ENCODE measurements at regions of chr9 and their contacts with region 1.

Region 1: GRCh38 chr9:20622330-20623020 is at the start of gene MLLT3:
- DNase-seq: peak; percentile 98
- H3K4me3 Mint-ChIP-seq: peak within 1 kb of the TSS; percentile 96
- H3K27ac Mint-ChIP-seq: peak within 1 kb of the TSS; percentile 94
- H3K4me1 Mint-ChIP-seq: peaks cover 41% of the 10 kb centered on the region
- H3K27me3 Mint-ChIP-seq: no peaks in the 10 kb centered on the region
- total RNA-seq, gene MLLT3: 30.8 to 34.0 TPM

Region 2: GRCh38 chr9:19379697-19380046 is 1242.8 kb before region 1 on chr9:
- CTCF ChIA-PET with region 1: no interaction called
- POLR2A ChIA-PET with region 1: no interaction called
- intact Hi-C with region 1: loop called (anchors 5 kb)
- DNase-seq: no peak
- H3K4me3 Mint-ChIP-seq: peak overlapping the region; percentile 100
- H3K27ac Mint-ChIP-seq: peak overlapping the region; percentile 100
- H3K4me1 Mint-ChIP-seq: peaks cover 50% of the 10 kb centered on the region
- H3K27me3 Mint-ChIP-seq: peaks cover 3% of the 10 kb centered on the region

Region 3: DNA sequence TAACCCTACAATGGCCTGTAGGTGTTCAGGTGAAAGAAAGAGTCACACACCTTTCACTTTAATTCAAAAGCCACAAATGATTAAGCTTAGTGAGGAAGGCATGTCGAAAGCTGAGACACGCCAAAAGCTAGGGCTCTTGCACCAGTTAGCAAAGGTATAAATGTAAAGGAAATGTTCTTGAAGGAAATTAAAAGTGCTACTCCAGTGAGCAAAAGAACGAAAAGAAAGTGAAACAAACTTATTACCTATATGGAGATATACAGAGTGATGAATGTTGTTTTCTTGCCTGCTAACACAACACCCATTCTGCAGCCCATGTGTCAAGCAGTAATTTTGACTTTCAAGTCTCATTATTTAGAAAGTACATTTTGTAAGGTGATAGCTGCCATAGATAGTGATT is 579.4 kb before region 1 on chr9:
- CTCF ChIA-PET with region 1: no interaction called
- POLR2A ChIA-PET with region 1: no interaction called
- intact Hi-C with region 1: loop called (anchors 1 kb)
- DNase-seq: peak; percentile 23
- H3K4me3 Mint-ChIP-seq: peak overlapping the region; percentile 53
- H3K27ac Mint-ChIP-seq: peak overlapping the region; percentile 70
- H3K4me1 Mint-ChIP-seq: peaks cover 30% of the 10 kb centered on the region
- H3K27me3 Mint-ChIP-seq: no peaks in the 10 kb centered on the region

Region 4: GRCh38 chr9:20376731-20377375 is 245.6 kb before region 1 on chr9:
- CTCF ChIA-PET with region 1: no interaction called
- POLR2A ChIA-PET with region 1: no interaction called
- intact Hi-C with region 1: loop called (anchors 5 kb)
- DNase-seq: no peak
- H3K4me3 Mint-ChIP-seq: no peak overlapping the region
- H3K27ac Mint-ChIP-seq: no peak overlapping the region
- H3K4me1 Mint-ChIP-seq: peaks cover 36% of the 10 kb centered on the region
- H3K27me3 Mint-ChIP-seq: no peaks in the 10 kb centered on the region

Region 5: GRCh38 chr9:20479419-20480155 is 142.9 kb before region 1 on chr9:
- CTCF ChIA-PET with region 1: no interaction called
- POLR2A ChIA-PET with region 1: no interaction called
- intact Hi-C with region 1: no loop called
- DNase-seq: no peak
- H3K4me3 Mint-ChIP-seq: no peak overlapping the region
- H3K27ac Mint-ChIP-seq: no peak overlapping the region
- H3K4me1 Mint-ChIP-seq: peaks cover 31% of the 10 kb centered on the region
- H3K27me3 Mint-ChIP-seq: no peaks in the 10 kb centered on the region

Region 6: GRCh38 chr9:20524776-20525175 is 97.7 kb before region 1 on chr9:
- CTCF ChIA-PET with region 1: interaction called, 5 read pairs
- POLR2A ChIA-PET with region 1: interaction called, 3 read pairs
- intact Hi-C with region 1: loop called (anchors 1 kb)
- DNase-seq: peak; percentile 50
- H3K4me3 Mint-ChIP-seq: no peak overlapping the region
- H3K27ac Mint-ChIP-seq: no peak overlapping the region
- H3K4me1 Mint-ChIP-seq: peaks cover 70% of the 10 kb centered on the region
- H3K27me3 Mint-ChIP-seq: no peaks in the 10 kb centered on the region

Region 7: GRCh38 chr9:20640331-20641187 is 18.1 kb after region 1 on chr9:
- CTCF ChIA-PET with region 1: interaction called, 6 read pairs
- POLR2A ChIA-PET with region 1: no interaction called
- intact Hi-C with region 1: loop called (anchors 1 kb)
- DNase-seq: peak; percentile 81
- H3K4me3 Mint-ChIP-seq: peak overlapping the region; percentile 18
- H3K27ac Mint-ChIP-seq: peak overlapping the region; percentile 49
- H3K4me1 Mint-ChIP-seq: peaks cover 10% of the 10 kb centered on the region
- H3K27me3 Mint-ChIP-seq: peaks cover 3% of the 10 kb centered on the region

Region 8: DNA sequence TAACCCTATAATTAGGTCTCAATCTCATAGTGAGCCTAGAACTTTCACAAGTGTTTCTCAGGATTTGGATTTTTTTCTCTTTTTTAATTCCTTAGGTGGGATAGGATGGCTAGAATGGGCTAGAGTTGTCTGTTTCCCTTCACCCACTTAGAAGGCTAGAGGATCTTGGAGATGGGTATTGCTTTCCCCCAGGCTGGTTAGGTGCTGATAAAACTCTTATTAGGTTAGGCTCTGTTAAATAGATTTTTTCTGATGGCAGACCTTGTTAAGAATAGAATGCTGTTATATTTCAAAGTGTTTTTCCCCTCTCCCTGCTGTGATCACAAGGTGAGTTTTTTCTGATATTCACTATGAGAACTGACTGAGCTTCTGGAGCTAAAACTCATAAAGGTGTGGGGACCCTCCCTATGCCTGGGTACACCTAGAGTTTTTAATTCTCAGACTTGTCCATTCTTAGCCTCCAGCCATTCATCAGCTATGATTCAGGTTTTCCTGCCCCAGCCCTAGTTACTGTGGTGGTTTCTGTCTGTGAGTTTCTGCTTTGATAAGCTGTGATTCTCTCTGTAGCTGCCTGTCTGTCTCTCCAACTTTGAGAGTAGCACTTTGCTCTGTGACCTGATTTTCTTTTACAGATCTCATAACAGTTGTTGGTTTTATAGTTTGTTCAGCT is 276.5 kb after region 1 on chr9:
- CTCF ChIA-PET with region 1: no interaction called
- POLR2A ChIA-PET with region 1: no interaction called
- intact Hi-C with region 1: no loop called
- DNase-seq: peak; percentile 11
- H3K4me3 Mint-ChIP-seq: no peak overlapping the region
- H3K27ac Mint-ChIP-seq: no peak overlapping the region
- H3K4me1 Mint-ChIP-seq: peaks cover 2% of the 10 kb centered on the region
- H3K27me3 Mint-ChIP-seq: no peaks in the 10 kb centered on the region

Region 9: GRCh38 chr9:20997503-20998076 is 375.1 kb after region 1 on chr9:
- CTCF ChIA-PET with region 1: no interaction called
- POLR2A ChIA-PET with region 1: interaction called, 5 read pairs
- intact Hi-C with region 1: loop called (anchors 2 kb)
- DNase-seq: peak; percentile 17
- H3K4me3 Mint-ChIP-seq: no peak overlapping the region
- H3K27ac Mint-ChIP-seq: peak overlapping the region; percentile 49
- H3K4me1 Mint-ChIP-seq: peaks cover 46% of the 10 kb centered on the region
- H3K27me3 Mint-ChIP-seq: no peaks in the 10 kb centered on the region

Measured in activated CD4-positive, alpha-beta memory T cell treated with anti-CD3 and anti-CD28 coated beads for 36 hours (primary cell).